ENCODE measurements at regions of chr20 and their contacts with region 1.

Region 1: DNA sequence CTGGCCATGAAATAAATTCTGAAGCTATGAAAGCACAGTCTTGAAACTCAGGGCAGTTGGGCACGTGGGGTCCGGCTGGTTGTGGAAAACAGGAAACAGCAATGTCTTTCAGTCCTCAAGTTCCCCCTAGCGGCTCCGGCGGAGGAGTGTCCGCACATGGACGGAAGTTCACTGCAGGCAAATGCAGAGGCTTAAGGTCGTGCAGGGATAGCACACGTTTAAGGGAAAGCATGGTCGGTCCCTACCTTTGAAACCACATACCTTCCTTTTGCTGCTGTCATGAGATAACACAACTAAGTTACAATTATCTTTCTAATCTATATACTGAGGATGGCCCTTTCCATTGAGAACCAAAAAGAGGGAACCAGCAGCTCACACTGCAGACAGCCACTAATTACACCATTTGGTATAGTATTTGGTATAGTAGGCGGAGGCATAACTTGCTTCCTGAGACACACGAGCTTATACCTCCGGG is 52.6 kb upstream of the NFATC2 start:
- DNase-seq: peak; percentile 71 to 79
- H3K4me3 ChIP-seq: no peak overlapping the region
- H3K27ac ChIP-seq: no peak overlapping the region
- H3K4me1 ChIP-seq: peaks cover 10% of the 10 kb centered on the region
- H3K27me3 ChIP-seq: no peaks in the 10 kb centered on the region
- CTCF ChIP-seq: peak; percentile 93

Region 2: GRCh38 chr20:51385646-51386530 is 209.2 kb before region 1 on chr20:
- CTCF ChIA-PET with region 1: interaction called, 21 read pairs
- POLR2A ChIA-PET with region 1: no interaction called
- intact Hi-C with region 1: loop called (anchors 1 kb)
- DNase-seq: peak in 1 of 2 experiments; percentile 16
- H3K4me3 ChIP-seq: no peak overlapping the region
- H3K27ac ChIP-seq: no peak overlapping the region
- H3K4me1 ChIP-seq: peaks cover 21% of the 10 kb centered on the region
- H3K27me3 ChIP-seq: no peaks in the 10 kb centered on the region
- CTCF ChIP-seq: peak; percentile 73

Region 3: GRCh38 chr20:52083627-52084232 is 488.6 kb after region 1 on chr20:
- CTCF ChIA-PET with region 1: no interaction called
- POLR2A ChIA-PET with region 1: no interaction called
- intact Hi-C with region 1: loop called (anchors 1 kb)
- DNase-seq: peak; percentile 34 to 48
- H3K4me3 ChIP-seq: no peak overlapping the region
- H3K27ac ChIP-seq: peak overlapping the region; percentile 33; the same call in 1 of the 2 replicates
- H3K4me1 ChIP-seq: peaks cover 13% of the 10 kb centered on the region
- H3K27me3 ChIP-seq: no peaks in the 10 kb centered on the region
- CTCF ChIP-seq: peak; percentile 82